Cardiac septum (tissue), 1 donor: ENCODE measurements at regions of chr4 and their contacts with region 1.

Region 1: DNA sequence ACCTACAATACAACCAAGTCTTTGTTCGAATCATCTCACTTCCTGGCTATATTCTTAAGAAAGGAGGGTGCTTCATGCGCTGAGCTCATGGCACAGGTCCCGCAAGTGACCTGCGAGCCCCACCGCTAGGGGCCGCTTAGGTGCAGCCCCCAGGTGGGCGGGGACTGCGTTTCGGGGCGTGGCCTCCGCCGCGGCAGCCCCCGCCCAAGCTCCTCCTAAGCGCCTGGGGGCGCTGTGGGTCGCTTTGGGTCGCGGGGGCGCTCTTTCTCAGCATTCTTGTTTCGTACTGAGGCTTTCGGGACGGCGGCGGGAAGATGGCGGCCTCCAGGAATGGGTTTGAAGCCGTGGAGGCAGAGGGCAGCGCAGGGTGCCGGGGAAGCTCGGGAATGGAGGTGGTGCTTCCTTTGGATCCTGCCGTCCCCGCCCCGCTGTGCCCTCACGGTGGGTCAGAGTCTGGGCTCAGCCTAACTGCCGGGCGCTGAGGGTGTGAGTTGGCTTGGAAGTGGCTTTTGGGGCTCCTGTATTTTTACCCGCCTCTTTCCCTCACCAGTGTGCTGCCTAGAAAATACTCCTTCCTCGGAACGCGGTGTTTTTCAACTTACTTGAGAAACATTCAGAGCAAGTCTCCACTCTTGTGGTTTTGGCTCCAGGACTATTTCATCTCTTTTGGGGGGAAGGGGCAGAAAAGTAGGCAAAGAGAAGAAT is at the start of gene ZCCHC4:
- DNase-seq: peak; percentile 95
- total RNA-seq, gene ZCCHC4: 8.0 TPM

Region 2: GRCh38 chr4:24472514-24473308 is 839.9 kb before region 1 on chr4:
- intact Hi-C with region 1: loop called (anchors 5 kb)
- DNase-seq: peak; percentile 86

Region 3: GRCh38 chr4:25159884-25160713 is 152.5 kb before region 1 on chr4 and contains the start of gene SEPSECS:
- intact Hi-C with region 1: loop called (anchors 2 kb)
- DNase-seq: peak; percentile 98
- total RNA-seq, gene SEPSECS: 6.6 TPM

Region 4: DNA sequence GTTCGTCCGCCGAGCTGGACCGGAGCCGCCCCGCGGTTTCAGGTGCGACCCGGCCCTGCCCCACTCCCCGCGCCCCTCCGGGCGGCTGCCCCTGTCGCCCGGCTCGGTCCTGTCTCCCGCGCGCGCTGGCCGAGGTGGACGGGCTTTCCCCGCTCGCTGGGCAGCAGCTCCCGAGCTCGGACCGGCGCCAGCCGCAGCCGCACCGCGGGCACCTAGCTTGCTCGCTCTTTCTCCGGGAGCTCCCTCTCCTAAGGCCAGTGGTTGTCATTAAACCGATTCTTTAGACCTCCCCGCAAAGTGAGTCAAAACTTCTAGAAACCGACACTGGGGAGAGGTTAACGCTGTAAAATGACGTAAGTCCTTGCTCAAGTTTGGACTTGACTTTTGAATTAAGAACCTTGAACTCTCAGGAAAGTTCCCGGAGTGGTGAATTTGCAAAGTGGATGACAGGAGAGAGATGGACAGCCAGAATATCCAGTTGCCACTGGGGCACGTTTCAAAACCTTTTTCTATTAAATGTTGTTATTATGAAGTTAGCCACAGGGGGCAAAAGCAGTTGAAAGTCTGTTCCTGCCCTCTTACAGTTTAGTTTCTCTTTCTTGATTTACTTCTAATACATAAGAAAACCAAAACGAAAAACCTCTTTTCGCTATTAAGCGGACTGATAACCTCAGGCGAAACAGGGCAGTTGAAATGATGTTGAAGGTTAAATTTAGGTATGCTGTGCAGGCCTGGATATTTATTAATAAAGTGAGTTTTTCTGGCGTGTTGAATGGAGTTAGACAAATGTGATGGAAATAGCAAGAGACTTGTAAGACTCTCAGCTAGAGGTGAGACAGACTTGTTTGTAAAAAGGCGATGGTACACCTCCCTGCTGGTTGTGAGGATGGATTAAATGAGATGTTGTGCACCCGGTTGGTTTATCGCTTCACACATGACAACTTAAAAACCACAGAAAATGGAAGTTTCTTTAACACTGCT is 78.0 kb before region 1 on chr4:
- intact Hi-C with region 1: loop called (anchors 5 kb)
- DNase-seq: peak; percentile 84

Region 5: GRCh38 chr4:25376754-25377571 is 64.3 kb after region 1 on chr4 and contains the start of gene ANAPC4:
- intact Hi-C with region 1: loop called (anchors 5 kb)
- DNase-seq: peak; percentile 97
- total RNA-seq, gene ANAPC4: 14.2 TPM

Region 6: GRCh38 chr4:25421816-25422525 is 109.3 kb after region 1 on chr4:
- intact Hi-C with region 1: no loop called
- DNase-seq: no peak